Cardiac septum (tissue), 1 donor: ENCODE measurements at regions of chr1 and their contacts with region 1.

Region 1: GRCh38 chr1:222455188-222455879 is 92.6 kb downstream of the HHIPL2 start:
- DNase-seq: peak; percentile 87

Region 2: GRCh38 chr1:221478050-221478949 is 977.0 kb before region 1 on chr1:
- intact Hi-C with region 1: loop called (anchors 10 kb)
- DNase-seq: no peak

Region 3: DNA sequence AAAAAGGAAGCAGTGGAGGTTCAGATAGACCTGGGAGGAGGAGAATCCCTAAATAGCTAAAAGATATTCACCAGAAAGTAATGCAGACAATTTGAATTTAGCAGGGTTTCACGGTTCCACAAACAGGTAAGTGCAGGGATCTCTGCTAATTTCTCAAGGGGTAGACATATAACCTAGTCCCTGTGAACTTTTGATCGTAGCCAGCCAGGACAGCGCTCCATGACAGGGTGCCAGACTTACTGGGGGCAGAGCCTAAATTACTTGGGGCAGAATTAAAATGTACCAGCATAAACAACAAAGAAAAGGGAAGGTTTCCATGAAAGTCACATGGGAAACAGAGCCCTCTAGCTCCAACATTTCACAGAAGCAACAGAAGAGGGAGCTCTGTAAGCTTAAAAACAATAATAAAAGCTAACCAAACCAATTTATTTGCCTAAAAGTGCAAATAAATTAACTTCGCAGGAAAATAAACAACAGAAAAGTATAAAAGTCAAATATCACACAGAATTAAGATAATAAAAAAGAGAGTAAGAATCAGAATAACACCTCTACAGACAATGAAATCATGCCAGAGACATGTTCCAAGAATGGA is 911.7 kb before region 1 on chr1:
- intact Hi-C with region 1: loop called (anchors 10 kb)
- DNase-seq: no peak

Region 4: GRCh38 chr1:222099746-222100145 is 355.6 kb before region 1 on chr1:
- intact Hi-C with region 1: loop called (anchors 2 kb)
- DNase-seq: no peak

Region 5: GRCh38 chr1:222240536-222241181 is 214.7 kb before region 1 on chr1:
- intact Hi-C with region 1: no loop called
- DNase-seq: no peak

Region 6: GRCh38 chr1:222757646-222758268 is 302.4 kb after region 1 on chr1:
- intact Hi-C with region 1: no loop called
- DNase-seq: no peak